ENCODE measurements at regions of chr14 and their contacts with region 1.

Region 1: DNA sequence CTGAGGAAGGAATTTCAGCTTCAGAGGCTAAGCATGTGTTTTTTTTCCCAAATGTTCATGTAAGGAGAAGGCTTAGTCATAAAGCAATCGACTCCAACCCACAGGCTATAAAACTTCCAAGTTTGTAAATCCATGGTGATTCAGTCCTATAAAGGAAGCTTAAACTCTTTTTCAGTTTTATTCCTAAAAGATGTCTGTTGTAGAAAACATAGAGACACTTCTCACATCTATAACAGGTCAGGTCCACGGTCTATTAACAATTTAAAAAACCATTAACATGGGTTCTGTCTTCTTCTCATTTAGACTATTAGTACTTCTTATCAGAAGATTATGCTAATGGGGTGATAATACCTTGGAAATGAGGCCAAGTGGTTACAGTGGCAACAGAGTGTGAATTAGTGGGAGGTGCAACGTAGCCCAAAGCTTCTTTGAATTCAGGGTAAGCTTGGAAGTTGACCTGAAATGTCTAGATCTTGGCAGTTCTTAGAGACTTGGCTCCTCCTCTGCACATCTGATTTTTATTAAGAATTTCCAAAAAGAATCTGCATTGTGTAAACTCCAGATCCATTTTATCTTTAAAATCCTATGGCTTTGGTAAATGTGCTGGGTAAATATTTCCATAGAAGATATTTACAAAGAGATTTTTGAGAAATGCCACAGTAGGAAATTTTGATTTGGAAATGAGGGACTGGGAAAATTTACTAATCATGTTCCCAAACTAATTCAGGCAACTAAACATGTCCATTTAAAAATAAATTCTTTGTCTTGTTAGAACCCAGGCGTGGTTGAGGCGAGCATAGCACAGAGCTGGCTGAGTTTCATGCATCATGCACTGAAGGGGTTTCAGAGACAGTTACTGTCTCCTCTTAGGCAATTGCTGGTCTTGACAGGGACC is 86.4 kb downstream of the EML1 start:
- DNase-seq: no peak
- H3K4me3 ChIP-seq: no peak overlapping the region
- H3K27ac ChIP-seq: peak overlapping the region; percentile 44 to 67 (median 62)
- H3K4me1 ChIP-seq: peaks cover 4 to 23% (median 11%) of the 10 kb centered on the region in 4 donors
- H3K27me3 ChIP-seq: peaks cover 4% of the 10 kb centered on the region
- CTCF ChIP-seq: no peak
- EP300 ChIP-seq: no peak
- POLR2A ChIP-seq: no peak

Region 2: GRCh38 chr14:99809861-99810260 is 69.8 kb before region 1 on chr14:
- in situ Hi-C with region 1: no loop called
- intact Hi-C with region 1: loop called (anchors 10 kb)
- DNase-seq: no peak
- H3K4me3 ChIP-seq: no peak overlapping the region
- H3K27ac ChIP-seq: peak overlapping the region; percentile 55 to 83 (median 64)
- H3K4me1 ChIP-seq: peaks cover 0 to 28% (median 7%) of the 10 kb centered on the region in 4 donors
- H3K27me3 ChIP-seq: no peaks in the 10 kb centered on the region
- CTCF ChIP-seq: no peak
- EP300 ChIP-seq: no peak
- POLR2A ChIP-seq: no peak

Region 3: GRCh38 chr14:99857551-99857950 is 22.1 kb before region 1 on chr14:
- in situ Hi-C with region 1: no loop called
- intact Hi-C with region 1: loop called (anchors 2 kb)
- DNase-seq: no peak
- H3K4me3 ChIP-seq: no peak overlapping the region
- H3K27ac ChIP-seq: no peak overlapping the region
- H3K4me1 ChIP-seq: no peaks in the 10 kb centered on the region
- H3K27me3 ChIP-seq: no peaks in the 10 kb centered on the region
- CTCF ChIP-seq: no peak
- EP300 ChIP-seq: no peak
- POLR2A ChIP-seq: no peak

Region 4: DNA sequence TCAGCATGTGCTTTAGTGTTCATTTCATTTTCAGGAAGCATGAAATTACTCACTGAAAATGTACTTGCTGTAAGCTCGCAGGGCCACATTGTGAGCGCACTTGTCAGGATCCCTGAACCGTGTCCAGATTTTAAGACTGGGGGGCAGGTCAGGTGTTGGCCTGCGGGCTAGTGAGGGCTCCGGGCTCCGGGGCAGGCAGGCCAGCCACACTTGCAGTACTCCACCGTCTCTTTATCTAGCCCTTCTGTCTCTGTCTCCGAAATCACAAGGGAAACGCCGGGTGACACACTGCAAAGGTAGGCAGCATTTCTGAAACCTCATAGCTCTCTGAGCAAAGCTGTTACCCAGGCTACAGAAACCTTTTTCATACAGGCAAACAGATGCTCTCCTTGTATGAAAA is 12.3 kb after region 1 on chr14:
- in situ Hi-C with region 1: no loop called
- intact Hi-C with region 1: loop called (anchors 1 kb)
- DNase-seq: no peak
- H3K4me3 ChIP-seq: no peak overlapping the region
- H3K27ac ChIP-seq: no peak overlapping the region
- H3K4me1 ChIP-seq: no peaks in the 10 kb centered on the region
- H3K27me3 ChIP-seq: no peaks in the 10 kb centered on the region
- CTCF ChIP-seq: no peak
- EP300 ChIP-seq: no peak
- POLR2A ChIP-seq: no peak